PC-3 (cell line): ENCODE measurements at regions of chr11 and their contacts with region 1.

Region 1: GRCh38 chr11:57530596-57531507 is at the start of gene TIMM10:
- DNase-seq: peak; percentile 100
- ATAC-seq: peak; percentile 95
- H3K4me3 ChIP-seq: peak within 1 kb of the TSS; percentile 83
- H3K27ac ChIP-seq: peak within 1 kb of the TSS; percentile 14; the same call in 1 of the 2 replicates
- H3K4me1 ChIP-seq: peaks cover 11% of the 10 kb centered on the region; the same call in 1 of the 2 replicates
- H3K27me3 ChIP-seq: no peaks in the 10 kb centered on the region
- CTCF ChIP-seq: no peak
- total RNA-seq, gene TIMM10: 233 and 313 TPM in 2 replicates

Region 2: DNA sequence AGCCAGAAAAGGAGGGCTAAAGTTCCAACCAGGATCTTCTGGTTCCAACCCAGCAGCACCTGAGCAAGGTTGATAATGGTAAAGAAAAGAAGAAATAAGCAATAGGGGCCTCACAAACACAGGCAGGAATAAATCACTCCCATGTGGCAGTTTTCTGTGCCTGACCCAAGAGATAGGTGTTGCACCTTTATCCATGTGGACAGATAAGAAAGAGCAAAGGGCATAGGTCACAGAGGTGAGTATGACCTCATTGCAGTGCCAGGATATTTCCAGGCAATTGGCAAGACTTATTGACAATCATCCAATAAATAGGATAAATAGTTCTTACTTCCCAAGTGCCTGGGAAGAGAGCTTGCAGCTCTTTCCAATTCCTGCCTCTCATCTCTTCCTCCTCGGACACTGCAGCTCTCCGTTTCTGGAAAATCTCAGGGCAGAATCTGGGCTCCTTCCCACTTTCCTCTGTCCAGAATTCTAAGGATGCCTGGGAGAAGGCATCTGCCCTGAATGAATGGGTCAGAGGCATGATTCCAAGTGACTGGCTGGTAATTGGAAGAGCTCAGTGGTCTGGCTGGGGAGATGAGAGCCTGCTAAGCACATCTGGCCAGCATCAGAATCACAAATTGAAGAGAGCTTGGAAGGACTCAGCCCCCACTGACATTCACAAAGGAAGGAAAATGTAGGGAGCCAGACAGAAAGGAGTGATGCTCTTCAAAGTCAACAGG is 363.6 kb before region 1 on chr11:
- CTCF ChIA-PET with region 1: no interaction called
- POLR2A ChIA-PET with region 1: no interaction called
- intact Hi-C with region 1: no loop called
- DNase-seq: no peak
- ATAC-seq: no peak
- H3K4me3 ChIP-seq: no peak overlapping the region
- H3K27ac ChIP-seq: no peak overlapping the region
- H3K4me1 ChIP-seq: no peaks in the 10 kb centered on the region
- H3K27me3 ChIP-seq: peaks cover 20% of the 10 kb centered on the region; the same call in 1 of the 2 replicates
- CTCF ChIP-seq: no peak

Region 3: GRCh38 chr11:57345555-57346211 is 185.2 kb before region 1 on chr11:
- CTCF ChIA-PET with region 1: interaction called, 10 read pairs
- POLR2A ChIA-PET with region 1: no interaction called
- intact Hi-C with region 1: loop called (anchors 2 kb)
- DNase-seq: peak; percentile 94
- ATAC-seq: peak; percentile 81
- H3K4me3 ChIP-seq: no peak overlapping the region
- H3K27ac ChIP-seq: no peak overlapping the region
- H3K4me1 ChIP-seq: no peaks in the 10 kb centered on the region
- H3K27me3 ChIP-seq: no peaks in the 10 kb centered on the region
- CTCF ChIP-seq: peak; percentile 79

Region 4: DNA sequence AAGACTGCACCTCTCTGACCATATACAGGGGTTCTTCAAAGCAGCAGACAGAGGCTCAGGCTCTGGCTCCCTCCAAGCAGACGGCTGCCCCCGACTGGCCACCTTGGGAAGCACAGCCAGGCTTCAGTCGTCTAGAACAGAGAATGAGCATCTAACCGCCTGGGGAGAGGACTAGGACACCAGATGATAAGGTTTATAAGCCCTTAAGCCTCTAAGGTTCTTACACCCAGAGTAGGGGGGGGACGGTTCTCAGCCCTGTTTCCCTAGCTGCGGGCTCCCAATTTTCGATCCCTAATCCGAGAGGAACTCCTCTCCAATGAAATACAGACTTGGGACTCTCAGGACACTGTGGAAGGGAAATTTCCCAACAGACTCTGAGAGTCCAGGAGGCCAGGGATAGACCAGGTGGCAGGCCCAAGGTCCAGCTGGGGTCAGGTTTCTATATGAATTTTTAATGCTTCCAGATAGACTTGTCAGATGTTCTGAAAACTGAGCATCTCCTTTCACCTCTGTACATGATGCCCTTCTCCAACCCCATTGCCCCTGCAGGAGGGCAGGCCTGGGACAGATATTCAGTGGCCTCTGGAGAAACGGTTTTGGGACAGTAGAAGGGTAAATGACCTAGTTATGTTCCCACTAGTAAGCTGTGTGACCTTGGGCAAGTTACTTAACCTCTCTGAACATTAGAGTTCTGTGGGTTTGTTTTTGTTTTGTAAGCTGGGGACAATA is 50.3 kb before region 1 on chr11:
- CTCF ChIA-PET with region 1: interaction called, 3 read pairs
- POLR2A ChIA-PET with region 1: no interaction called
- intact Hi-C with region 1: loop called (anchors 5 kb)
- DNase-seq: peak; percentile 80
- ATAC-seq: peak; percentile 31; the same call in 1 of the 2 replicates
- H3K4me3 ChIP-seq: no peak overlapping the region
- H3K27ac ChIP-seq: no peak overlapping the region
- H3K4me1 ChIP-seq: peaks cover 23% of the 10 kb centered on the region
- H3K27me3 ChIP-seq: no peaks in the 10 kb centered on the region
- CTCF ChIP-seq: peak; percentile 93

Region 5: GRCh38 chr11:57567515-57568329 is 36.9 kb after region 1 on chr11 and contains the start of gene UBE2L6:
- CTCF ChIA-PET with region 1: no interaction called
- POLR2A ChIA-PET with region 1: no interaction called
- intact Hi-C with region 1: loop called (anchors 1 kb)
- DNase-seq: no peak
- ATAC-seq: peak; percentile 81
- H3K4me3 ChIP-seq: peak within 1 kb of the TSS; percentile 98
- H3K27ac ChIP-seq: no peak within 1 kb of the TSS
- H3K4me1 ChIP-seq: peaks cover 20% of the 10 kb centered on the region
- H3K27me3 ChIP-seq: no peaks in the 10 kb centered on the region
- CTCF ChIP-seq: no peak; the same call in 1 of the 2 replicates
- total RNA-seq, gene UBE2L6: 16.5 and 17.3 TPM in 2 replicates

Region 6: DNA sequence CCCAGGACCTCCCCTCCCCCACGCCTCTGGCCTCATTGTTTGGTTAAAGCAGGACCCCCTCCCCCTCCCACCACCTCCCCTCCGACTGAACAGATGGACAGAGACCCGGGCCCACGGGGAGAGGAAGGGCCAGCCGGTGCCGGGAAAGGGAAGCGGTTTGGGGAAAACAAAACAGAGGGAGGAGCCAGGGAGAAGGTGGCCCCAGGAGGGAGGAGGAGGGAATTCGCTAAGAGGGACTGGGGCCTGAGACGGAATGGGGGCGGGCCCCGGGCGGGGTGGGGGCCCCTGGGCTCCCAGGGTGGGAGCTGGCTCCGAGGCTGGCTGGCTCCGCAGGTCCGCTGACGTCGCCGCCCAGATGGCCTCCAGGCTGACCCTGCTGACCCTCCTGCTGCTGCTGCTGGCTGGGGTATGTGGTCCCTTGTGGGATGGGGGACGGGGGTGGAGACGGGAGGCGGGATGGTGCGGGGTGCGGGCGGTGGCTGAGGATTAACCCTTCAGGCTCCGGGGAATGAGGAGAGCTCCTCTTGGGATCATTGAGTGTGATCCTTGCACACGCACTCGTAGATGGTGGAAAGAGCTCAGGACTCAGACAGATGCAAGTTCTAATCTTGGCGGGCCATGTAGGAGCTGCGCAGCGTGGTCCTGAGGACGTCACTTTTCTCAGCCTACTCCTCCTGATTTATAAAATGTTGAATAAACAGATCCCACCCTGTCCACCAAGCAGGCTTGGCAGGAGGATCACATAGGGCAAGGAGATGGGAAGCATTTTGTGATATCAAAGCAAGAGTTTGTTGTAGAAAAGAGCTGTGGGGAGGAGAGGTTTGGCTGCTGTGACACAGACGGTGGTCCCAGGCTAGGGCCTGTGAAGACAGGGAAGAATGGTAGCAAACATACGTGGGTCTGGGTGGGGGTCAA is 67.3 kb after region 1 on chr11:
- CTCF ChIA-PET with region 1: no interaction called
- POLR2A ChIA-PET with region 1: no interaction called
- intact Hi-C with region 1: no loop called
- DNase-seq: no peak
- ATAC-seq: no peak; the same call in 1 of the 2 replicates
- H3K4me3 ChIP-seq: no peak overlapping the region
- H3K27ac ChIP-seq: no peak overlapping the region
- H3K4me1 ChIP-seq: no peaks in the 10 kb centered on the region
- H3K27me3 ChIP-seq: peaks cover 55% of the 10 kb centered on the region
- CTCF ChIP-seq: no peak

Region 7: DNA sequence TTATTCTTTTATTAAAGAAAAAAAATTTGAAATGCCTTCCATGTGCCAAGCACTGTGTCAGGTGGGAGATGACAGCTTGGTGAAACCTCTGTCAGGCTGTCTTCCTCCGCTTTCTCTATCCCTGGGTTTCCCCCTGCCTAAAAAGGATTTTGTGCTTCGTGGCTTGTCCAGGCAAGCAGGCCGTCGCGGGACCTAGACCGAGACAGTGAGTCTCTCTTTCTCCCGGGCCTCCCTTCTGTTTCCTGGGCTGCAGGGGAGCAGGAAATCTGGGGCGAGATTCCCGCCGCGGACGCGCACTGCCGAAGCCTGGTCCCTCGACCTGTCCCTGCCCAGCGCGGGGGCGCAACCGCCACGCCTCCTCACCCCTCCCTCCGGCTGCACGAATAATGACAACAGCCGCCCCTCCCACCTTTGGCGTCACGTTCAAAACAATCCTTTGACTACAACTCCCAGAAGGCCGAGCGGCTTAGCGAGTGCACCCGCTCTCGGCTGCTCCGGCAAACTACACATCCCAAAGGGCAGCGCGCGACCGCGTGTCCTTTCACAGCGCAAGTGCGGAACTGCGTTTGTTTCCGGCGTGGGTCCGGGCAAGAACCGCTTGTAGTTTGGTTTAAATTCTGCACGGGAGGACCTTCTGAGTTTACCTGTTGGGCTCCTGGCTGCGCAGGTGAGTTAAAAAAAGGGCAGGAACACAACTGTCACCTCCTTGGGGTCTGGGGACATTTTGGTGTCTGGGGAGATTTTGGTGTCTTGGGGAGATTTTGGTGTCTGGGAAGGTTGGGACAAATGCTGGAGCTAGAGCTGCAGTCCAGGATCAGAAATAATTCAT is 126.6 kb after region 1 on chr11 and contains the start of gene CLP1:
- CTCF ChIA-PET with region 1: no interaction called
- POLR2A ChIA-PET with region 1: interaction called, 11 read pairs
- intact Hi-C with region 1: no loop called
- DNase-seq: peak; percentile 100
- ATAC-seq: peak; percentile 98
- H3K4me3 ChIP-seq: peak within 1 kb of the TSS; percentile 94
- H3K27ac ChIP-seq: 0 out of 2 replicates have a peak within 1 kb of the TSS, but pooled peaks have one; percentile 11
- H3K4me1 ChIP-seq: peaks cover 8% of the 10 kb centered on the region
- H3K27me3 ChIP-seq: no peaks in the 10 kb centered on the region
- CTCF ChIP-seq: no peak
- total RNA-seq, gene CLP1: 23.0 and 28.4 TPM in 2 replicates

Region 8: GRCh38 chr11:57873196-57873911 is 342.5 kb after region 1 on chr11:
- CTCF ChIA-PET with region 1: no interaction called
- POLR2A ChIA-PET with region 1: no interaction called
- intact Hi-C with region 1: no loop called
- DNase-seq: peak; percentile 17
- ATAC-seq: no peak
- H3K4me3 ChIP-seq: no peak overlapping the region
- H3K27ac ChIP-seq: no peak overlapping the region
- H3K4me1 ChIP-seq: no peaks in the 10 kb centered on the region
- H3K27me3 ChIP-seq: peaks cover 32% of the 10 kb centered on the region
- CTCF ChIP-seq: no peak